ENCODE measurements at regions of chr12 and their contacts with region 1.

Region 1: DNA sequence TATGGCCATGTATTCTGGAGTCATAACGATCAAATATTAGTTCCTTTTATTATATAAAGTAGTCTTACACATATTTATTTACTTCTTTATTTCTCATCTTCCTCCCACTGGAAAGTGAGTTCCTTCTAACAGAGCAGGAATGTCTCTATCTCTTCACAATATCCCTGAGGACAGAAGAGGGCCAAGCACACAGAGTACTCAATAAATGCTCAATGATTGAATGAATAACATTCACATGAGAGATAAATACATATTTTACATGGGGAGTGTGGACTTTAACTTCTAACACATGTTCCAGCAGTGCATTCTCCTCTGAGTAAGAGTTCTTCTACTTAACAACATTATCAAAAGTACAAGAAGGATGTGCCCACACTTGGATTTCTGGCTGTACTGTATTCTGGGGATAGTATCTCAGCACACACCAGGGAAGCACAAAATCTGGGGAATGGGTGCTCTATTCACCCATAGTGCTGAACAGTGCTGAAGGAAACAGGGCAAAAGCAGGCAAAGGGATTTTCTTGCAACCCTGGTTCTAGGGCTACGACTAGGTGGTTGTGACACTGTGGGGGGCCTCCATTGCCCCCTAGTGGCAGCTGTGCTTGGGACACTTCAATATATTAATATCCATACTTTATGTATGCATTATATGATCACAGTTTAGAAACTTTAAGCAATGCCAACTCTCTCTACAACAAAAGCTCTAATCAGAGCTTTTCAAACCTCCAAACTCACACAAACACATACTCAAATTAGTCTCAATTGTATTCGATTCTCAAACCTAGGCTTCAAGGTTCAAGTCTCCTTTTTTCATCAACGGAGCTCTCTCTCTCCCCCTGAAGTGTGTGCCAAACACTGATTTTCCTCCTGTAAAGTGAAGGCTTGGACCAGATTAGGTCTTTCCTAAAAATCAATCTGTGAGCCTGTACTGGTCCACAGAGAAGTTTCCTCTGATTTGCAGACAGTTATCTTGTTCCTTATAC is 115.5 kb downstream of the SLC2A13 start:
- DNase-seq: peak; percentile 56
- ATAC-seq: peak; percentile 83 to 89
- H3K4me3 ChIP-seq: no peak overlapping the region
- H3K27ac ChIP-seq: no peak overlapping the region
- H3K4me1 ChIP-seq: no peaks in the 10 kb centered on the region
- H3K27me3 ChIP-seq: no peaks in the 10 kb centered on the region
- CTCF ChIP-seq: peak; percentile 83

Region 2: DNA sequence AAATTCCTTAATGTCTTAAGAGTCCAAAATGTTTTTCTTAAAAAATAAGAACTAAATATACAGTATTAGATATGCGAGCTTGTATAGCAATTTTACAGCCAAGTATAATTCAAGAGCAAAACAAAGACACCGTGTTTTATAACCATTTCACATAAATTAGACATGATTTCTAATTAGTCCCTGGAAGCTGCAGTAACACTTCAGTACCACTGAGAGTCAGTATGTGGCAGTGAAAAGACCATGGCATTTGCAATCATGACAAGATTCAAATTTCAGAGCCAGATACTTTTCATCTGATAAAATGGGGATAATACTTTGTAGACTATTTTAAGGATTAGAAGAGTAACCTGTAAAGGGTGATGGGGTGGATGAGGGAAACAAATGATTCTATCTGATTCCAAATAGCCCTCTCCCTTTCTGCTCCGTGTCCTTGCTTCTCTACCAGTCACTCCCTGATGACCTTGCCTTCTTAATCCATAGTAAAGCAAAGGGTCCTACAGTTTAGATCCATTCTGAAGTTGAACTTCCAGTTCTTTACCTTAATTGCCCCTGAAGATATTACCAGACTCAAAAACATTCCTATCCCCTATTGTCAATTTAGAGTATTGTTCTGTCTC is 225.4 kb before region 1 on chr12:
- intact Hi-C with region 1: loop called (anchors 10 kb)
- DNase-seq: no peak
- ATAC-seq: peak; percentile 52 to 71
- H3K4me3 ChIP-seq: no peak overlapping the region
- H3K27ac ChIP-seq: no peak overlapping the region
- H3K4me1 ChIP-seq: no peaks in the 10 kb centered on the region
- H3K27me3 ChIP-seq: no peaks in the 10 kb centered on the region
- CTCF ChIP-seq: peak; percentile 73